Activated CD8-positive, alpha-beta T cell treated with anti-CD3 and anti-CD28 coated beads for 36 hours (primary cell): ENCODE measurements at regions of chr5 and their contacts with region 1.

Region 1: DNA sequence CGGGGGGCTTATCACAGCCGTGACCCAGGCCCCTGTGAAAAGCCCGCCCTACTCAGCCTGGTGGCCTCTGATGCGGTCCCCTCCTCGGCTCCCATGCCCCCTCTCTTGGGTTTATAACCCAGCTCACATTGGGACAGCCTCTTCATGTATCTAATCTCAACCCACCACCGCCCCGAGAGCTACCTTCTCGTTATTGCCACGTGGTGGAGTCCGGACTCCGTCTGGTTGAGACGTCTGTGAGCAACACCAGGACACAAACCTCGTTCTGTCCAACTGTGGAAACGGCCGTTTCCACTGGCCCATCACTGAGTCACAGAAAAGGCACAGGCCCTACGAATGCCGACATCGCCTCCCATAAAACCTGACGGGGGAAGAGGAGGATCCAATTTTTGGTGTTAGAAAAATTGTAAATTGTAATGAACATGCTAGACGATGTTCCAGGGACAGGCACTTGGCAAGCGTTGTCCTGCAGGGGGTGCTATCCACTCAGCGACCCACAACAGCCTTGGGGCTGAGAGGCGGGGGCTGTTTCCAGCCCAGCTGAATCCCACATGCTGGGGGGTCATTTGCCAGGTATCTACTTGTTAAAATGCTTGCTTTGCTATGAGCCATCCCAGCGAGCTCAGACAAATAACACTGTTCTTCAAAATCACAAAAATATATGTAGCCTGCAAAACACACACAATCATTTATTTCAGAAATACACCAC is 37.3 kb upstream of the N4BP3 start:
- DNase-seq: peak; percentile 90
- ATAC-seq: peak; percentile 90
- H3K4me3 Mint-ChIP-seq: peak overlapping the region; percentile 58
- H3K27ac Mint-ChIP-seq: peak overlapping the region; percentile 51
- H3K4me1 Mint-ChIP-seq: peaks cover 15% of the 10 kb centered on the region
- H3K27me3 Mint-ChIP-seq: peaks cover 7% of the 10 kb centered on the region
- CTCF ChIP-seq: peak; percentile 98

Region 2: GRCh38 chr5:178090858-178091540 is 15.0 kb after region 1 on chr5:
- CTCF ChIA-PET with region 1: interaction called, 39 read pairs
- POLR2A ChIA-PET with region 1: interaction called, 3 read pairs
- intact Hi-C with region 1: no loop called
- DNase-seq: peak; percentile 62
- ATAC-seq: peak; percentile 60
- H3K4me3 Mint-ChIP-seq: no peak overlapping the region
- H3K27ac Mint-ChIP-seq: no peak overlapping the region
- H3K4me1 Mint-ChIP-seq: peaks cover 21% of the 10 kb centered on the region
- H3K27me3 Mint-ChIP-seq: peaks cover 1% of the 10 kb centered on the region
- CTCF ChIP-seq: no peak

Region 3: GRCh38 chr5:178113199-178113787 is 37.3 kb after region 1 on chr5 and contains the start of gene N4BP3:
- CTCF ChIA-PET with region 1: interaction called, 13 read pairs
- POLR2A ChIA-PET with region 1: no interaction called
- intact Hi-C with region 1: no loop called
- DNase-seq: peak; percentile 88
- ATAC-seq: peak; percentile 63
- H3K4me3 Mint-ChIP-seq: peak within 1 kb of the TSS; percentile 98
- H3K27ac Mint-ChIP-seq: peak within 1 kb of the TSS; percentile 95
- H3K4me1 Mint-ChIP-seq: peaks cover 23% of the 10 kb centered on the region
- H3K27me3 Mint-ChIP-seq: no peaks in the 10 kb centered on the region
- CTCF ChIP-seq: no peak
- total RNA-seq, gene N4BP3: 33.2 to 33.4 TPM

Region 4: GRCh38 chr5:178137991-178138390 is 62.0 kb after region 1 on chr5:
- CTCF ChIA-PET with region 1: interaction called, 319 read pairs
- POLR2A ChIA-PET with region 1: no interaction called
- intact Hi-C with region 1: no loop called
- DNase-seq: no peak
- ATAC-seq: no peak
- H3K4me3 Mint-ChIP-seq: no peak overlapping the region
- H3K27ac Mint-ChIP-seq: no peak overlapping the region
- H3K4me1 Mint-ChIP-seq: peaks cover 10% of the 10 kb centered on the region
- H3K27me3 Mint-ChIP-seq: no peaks in the 10 kb centered on the region
- CTCF ChIP-seq: no peak

Region 5: GRCh38 chr5:178153573-178154343 is 77.8 kb after region 1 on chr5 and contains the start of gene NHP2:
- CTCF ChIA-PET with region 1: interaction called, 319 read pairs
- POLR2A ChIA-PET with region 1: interaction called, 4 read pairs
- intact Hi-C with region 1: loop called (anchors 5 kb)
- DNase-seq: peak; percentile 99
- ATAC-seq: peak; percentile 98
- H3K4me3 Mint-ChIP-seq: peak within 1 kb of the TSS; percentile 97
- H3K27ac Mint-ChIP-seq: peak within 1 kb of the TSS; percentile 87
- H3K4me1 Mint-ChIP-seq: peaks cover 41% of the 10 kb centered on the region
- H3K27me3 Mint-ChIP-seq: no peaks in the 10 kb centered on the region
- CTCF ChIP-seq: no peak
- total RNA-seq, gene NHP2: 287 to 296 TPM

Region 6: GRCh38 chr5:178174456-178174855 is 98.5 kb after region 1 on chr5:
- CTCF ChIA-PET with region 1: interaction called, 36 read pairs
- POLR2A ChIA-PET with region 1: interaction called, 3 read pairs
- intact Hi-C with region 1: no loop called
- DNase-seq: no peak
- ATAC-seq: no peak
- H3K4me3 Mint-ChIP-seq: no peak overlapping the region
- H3K27ac Mint-ChIP-seq: no peak overlapping the region
- H3K4me1 Mint-ChIP-seq: no peaks in the 10 kb centered on the region
- H3K27me3 Mint-ChIP-seq: peaks cover 2% of the 10 kb centered on the region
- CTCF ChIP-seq: no peak

Region 7: GRCh38 chr5:178189433-178189832 is 113.4 kb after region 1 on chr5:
- CTCF ChIA-PET with region 1: interaction called, 14 read pairs
- POLR2A ChIA-PET with region 1: no interaction called
- intact Hi-C with region 1: no loop called
- DNase-seq: no peak
- ATAC-seq: no peak
- H3K4me3 Mint-ChIP-seq: no peak overlapping the region
- H3K27ac Mint-ChIP-seq: no peak overlapping the region
- H3K4me1 Mint-ChIP-seq: peaks cover 14% of the 10 kb centered on the region
- H3K27me3 Mint-ChIP-seq: peaks cover 7% of the 10 kb centered on the region
- CTCF ChIP-seq: no peak

Region 8: GRCh38 chr5:179166886-179167841 is 1091.2 kb after region 1 on chr5:
- CTCF ChIA-PET with region 1: no interaction called
- POLR2A ChIA-PET with region 1: no interaction called
- intact Hi-C with region 1: no loop called
- DNase-seq: peak; percentile 77
- ATAC-seq: peak; percentile 95
- H3K4me3 Mint-ChIP-seq: no peak overlapping the region
- H3K27ac Mint-ChIP-seq: no peak overlapping the region
- H3K4me1 Mint-ChIP-seq: peaks cover 3% of the 10 kb centered on the region
- H3K27me3 Mint-ChIP-seq: peaks cover 6% of the 10 kb centered on the region
- CTCF ChIP-seq: peak; percentile 93